A673 (cell line): ENCODE measurements at regions of chr2 and their contacts with region 1.

Region 1: GRCh38 chr2:108988796-108989713 is at the start of gene EDAR:
- DNase-seq: peak; percentile 46
- H3K4me3 ChIP-seq: no peak within 1 kb of the TSS
- H3K27ac ChIP-seq: no peak within 1 kb of the TSS
- H3K4me1 ChIP-seq: no peaks in the 10 kb centered on the region
- H3K27me3 ChIP-seq: peaks cover 12% of the 10 kb centered on the region
- CTCF ChIP-seq: peak; percentile 64
- total RNA-seq, gene EDAR: not detected in 2 replicates

Region 2: DNA sequence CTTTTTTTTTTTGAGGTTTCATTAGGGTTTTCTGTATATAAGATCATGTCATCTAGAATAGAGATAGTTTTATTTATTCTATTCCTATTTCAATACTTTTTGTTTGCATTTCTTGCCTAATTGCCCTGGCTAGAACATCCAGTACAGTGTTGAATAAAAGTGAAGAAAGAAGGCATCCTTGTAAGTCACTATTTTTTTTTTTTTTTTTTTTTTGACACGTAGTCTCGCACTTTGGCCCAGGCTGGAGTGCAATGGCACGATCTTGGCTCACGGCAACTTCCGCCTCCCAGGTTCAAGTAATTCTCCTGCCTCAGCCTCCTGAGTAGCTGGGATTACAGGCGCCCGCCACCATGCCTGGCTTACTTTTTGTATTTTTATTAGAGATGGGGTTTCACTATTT is 297.6 kb before region 1 on chr2:
- CTCF ChIA-PET with region 1: no interaction called
- POLR2A ChIA-PET with region 1: no interaction called
- intact Hi-C with region 1: loop called (anchors 5 kb)
- DNase-seq: no peak
- H3K4me3 ChIP-seq: no peak overlapping the region
- H3K27ac ChIP-seq: no peak overlapping the region
- H3K4me1 ChIP-seq: no peaks in the 10 kb centered on the region
- H3K27me3 ChIP-seq: no peaks in the 10 kb centered on the region
- CTCF ChIP-seq: no peak

Region 3: GRCh38 chr2:108927936-108928659 is 61.0 kb before region 1 on chr2:
- CTCF ChIA-PET with region 1: no interaction called
- POLR2A ChIA-PET with region 1: no interaction called
- intact Hi-C with region 1: loop called (anchors 2 kb)
- DNase-seq: peak; percentile 58
- H3K4me3 ChIP-seq: no peak overlapping the region
- H3K27ac ChIP-seq: no peak overlapping the region
- H3K4me1 ChIP-seq: peaks cover 6% of the 10 kb centered on the region
- H3K27me3 ChIP-seq: no peaks in the 10 kb centered on the region
- CTCF ChIP-seq: peak; percentile 88

Region 4: GRCh38 chr2:109475531-109476210 is 486.6 kb after region 1 on chr2:
- CTCF ChIA-PET with region 1: no interaction called
- POLR2A ChIA-PET with region 1: no interaction called
- intact Hi-C with region 1: no loop called
- DNase-seq: no peak
- H3K4me3 ChIP-seq: no peak overlapping the region
- H3K27ac ChIP-seq: no peak overlapping the region
- H3K4me1 ChIP-seq: no peaks in the 10 kb centered on the region
- H3K27me3 ChIP-seq: no peaks in the 10 kb centered on the region
- CTCF ChIP-seq: no peak